Heart right ventricle (tissue), 16 donors: ENCODE measurements at regions of chr1 and their contacts with region 1.

Region 1: DNA sequence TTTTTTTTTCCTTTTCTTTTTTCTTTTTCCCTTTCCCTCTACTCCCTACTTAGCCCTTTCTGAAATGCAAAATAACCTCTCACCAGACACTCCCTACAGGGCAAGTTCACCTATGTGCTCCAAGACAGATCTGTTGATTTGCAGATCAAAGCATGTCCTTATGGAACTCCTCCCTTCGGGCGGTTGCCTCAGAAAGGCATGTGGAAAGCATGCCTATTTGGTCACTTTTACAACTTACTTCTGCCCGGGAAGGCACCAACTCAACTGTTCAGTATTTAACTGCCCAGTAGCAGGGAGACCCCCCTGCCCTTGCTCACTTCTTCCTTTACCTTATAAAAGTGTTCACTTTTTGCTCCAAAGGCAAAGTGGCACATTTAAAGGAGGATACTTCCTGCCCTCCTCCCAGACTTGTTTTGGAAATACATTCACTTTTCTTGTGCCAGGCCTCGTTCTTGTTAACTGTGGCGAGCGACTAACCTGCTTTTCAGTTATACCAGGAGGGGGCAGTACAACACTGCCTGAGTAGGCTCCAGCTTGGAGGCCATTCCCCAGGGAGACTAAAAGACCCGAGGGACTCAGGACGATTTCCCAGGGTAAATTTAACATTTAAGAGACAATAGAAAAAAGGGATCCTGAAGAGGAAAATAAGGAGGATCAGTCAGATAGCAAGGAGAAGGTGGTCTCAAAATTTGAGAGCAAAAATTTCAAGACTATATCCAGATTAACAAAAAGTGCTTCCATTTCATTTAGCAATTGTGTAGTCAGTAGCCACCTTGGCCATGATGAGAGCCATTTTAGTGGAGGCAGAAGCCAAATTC is 12.3 kb upstream of the SLAMF7 start:
- DNase-seq: peak in 1 of 2 donors; percentile 50
- ATAC-seq: peak in 7 of 8 donors; percentile 55 to 90 (median 72)
- H3K4me3 ChIP-seq: no peak overlapping the region
- H3K27ac ChIP-seq: peak overlapping the region in 1 of 10 donors; percentile 45
- H3K4me1 ChIP-seq: peaks cover 0 to 30% (median 0%) of the 10 kb centered on the region in 9 donors
- H3K27me3 ChIP-seq: peaks cover 0 to 14% (median 0%) of the 10 kb centered on the region in 7 donors
- CTCF ChIP-seq: peak; percentile 48 to 88 (median 73)

Region 2: DNA sequence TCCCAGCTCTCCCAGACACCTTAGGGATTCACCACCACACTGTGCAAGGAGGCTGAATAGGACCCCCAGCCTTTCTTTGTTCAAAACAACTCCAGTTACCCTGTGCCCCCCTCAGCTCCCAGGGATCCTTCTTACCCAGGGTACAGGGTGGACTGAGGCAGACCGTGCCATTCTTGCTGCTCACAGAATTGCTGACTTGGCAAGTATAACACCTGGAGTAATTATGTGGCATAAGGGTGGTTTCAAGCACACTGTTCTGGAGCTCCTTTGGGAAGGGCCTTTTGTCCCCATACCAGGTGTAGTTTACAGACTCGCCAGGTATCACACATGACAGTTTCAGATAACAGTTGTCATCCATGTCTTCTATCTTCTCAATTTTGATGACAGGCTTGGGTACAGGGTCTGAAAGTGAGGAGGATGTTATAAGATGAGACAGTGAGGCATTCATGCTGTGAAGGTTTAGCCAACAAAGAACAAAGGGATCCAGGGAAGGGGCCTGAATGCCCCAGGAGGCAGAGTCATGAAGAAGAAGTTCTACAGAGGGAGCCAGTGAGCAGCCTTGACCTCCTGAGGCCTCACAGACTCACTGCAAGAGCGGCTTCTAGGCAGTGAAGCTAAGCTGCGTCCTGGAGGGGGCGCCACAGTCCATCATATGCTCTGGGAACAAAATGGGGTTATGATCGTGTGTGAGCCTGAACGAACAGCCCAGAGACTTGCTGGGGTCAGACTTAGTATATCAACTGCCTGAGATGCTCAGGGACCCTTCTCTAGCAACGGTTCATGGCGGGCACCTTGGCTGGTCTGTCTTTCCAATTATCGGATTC is 45.4 kb before region 1 on chr1:
- intact Hi-C with region 1: loop called in 1 of 10 experiments (anchors 5 kb)
- DNase-seq: peak; percentile 50 to 67
- ATAC-seq: peak in 7 of 8 donors; percentile 34 to 83 (median 70)
- H3K4me3 ChIP-seq: no peak overlapping the region
- H3K27ac ChIP-seq: peak overlapping the region in 1 of 10 donors; percentile 22
- H3K4me1 ChIP-seq: peaks cover 0 to 49% (median 0%) of the 10 kb centered on the region in 9 donors
- H3K27me3 ChIP-seq: peaks cover 0 to 34% (median 7%) of the 10 kb centered on the region in 7 donors
- CTCF ChIP-seq: peak; percentile 9 to 80 (median 52)

Region 3: GRCh38 chr1:160768295-160768657 is 41.6 kb after region 1 on chr1:
- intact Hi-C with region 1: loop called in 1 of 10 experiments (anchors 5 kb)
- DNase-seq: peak; percentile 38 to 41
- ATAC-seq: peak in 6 of 8 donors; percentile 55 to 72 (median 62)
- H3K4me3 ChIP-seq: peak overlapping the region in 4 of 10 donors; percentile 11 to 34 (median 24)
- H3K27ac ChIP-seq: peak overlapping the region in 1 of 10 donors; percentile 83
- H3K4me1 ChIP-seq: peaks cover 0 to 22% (median 0%) of the 10 kb centered on the region in 9 donors
- H3K27me3 ChIP-seq: peaks cover 0 to 10% (median 2%) of the 10 kb centered on the region in 7 donors
- CTCF ChIP-seq: peak in 6 of 9 donors; percentile 28 to 78 (median 38)

Region 4: DNA sequence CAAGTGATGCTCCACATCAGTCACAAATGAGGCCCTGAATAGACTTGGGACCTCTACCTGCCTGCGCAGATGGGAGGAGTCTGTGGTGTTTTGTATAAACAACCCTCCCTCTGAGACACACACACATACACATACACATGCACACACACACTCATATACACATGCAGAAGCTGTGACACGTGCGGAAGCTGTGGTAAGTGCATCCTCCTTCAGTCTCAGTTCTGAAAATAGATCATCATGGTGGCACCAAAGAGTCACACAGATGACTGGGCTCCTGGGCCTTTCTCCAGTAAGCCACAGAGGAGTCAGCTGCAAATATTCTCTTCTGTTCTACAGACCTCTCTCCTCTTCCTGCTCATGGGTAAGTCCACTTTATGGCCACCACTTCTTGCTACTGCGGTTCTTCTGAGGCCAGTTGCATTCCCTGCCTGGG is 69.3 kb after region 1 on chr1 and contains the start of gene LY9:
- intact Hi-C with region 1: no loop called
- DNase-seq: no peak
- ATAC-seq: peak in 3 of 8 donors; percentile 33 to 61 (median 51)
- H3K4me3 ChIP-seq: peak within 1 kb of the TSS in 1 of 10 donors; percentile 43
- H3K27ac ChIP-seq: peak within 1 kb of the TSS in 1 of 10 donors; percentile 67
- H3K4me1 ChIP-seq: peaks cover 0 to 6% (median 0%) of the 10 kb centered on the region in 9 donors
- H3K27me3 ChIP-seq: peaks cover 0 to 8% (median 0%) of the 10 kb centered on the region in 7 donors
- CTCF ChIP-seq: no peak
- total RNA-seq, gene LY9: 0.25 to 1.4 (median 0.42) TPM in 5 of 10 donors, not detected in the others

Region 5: DNA sequence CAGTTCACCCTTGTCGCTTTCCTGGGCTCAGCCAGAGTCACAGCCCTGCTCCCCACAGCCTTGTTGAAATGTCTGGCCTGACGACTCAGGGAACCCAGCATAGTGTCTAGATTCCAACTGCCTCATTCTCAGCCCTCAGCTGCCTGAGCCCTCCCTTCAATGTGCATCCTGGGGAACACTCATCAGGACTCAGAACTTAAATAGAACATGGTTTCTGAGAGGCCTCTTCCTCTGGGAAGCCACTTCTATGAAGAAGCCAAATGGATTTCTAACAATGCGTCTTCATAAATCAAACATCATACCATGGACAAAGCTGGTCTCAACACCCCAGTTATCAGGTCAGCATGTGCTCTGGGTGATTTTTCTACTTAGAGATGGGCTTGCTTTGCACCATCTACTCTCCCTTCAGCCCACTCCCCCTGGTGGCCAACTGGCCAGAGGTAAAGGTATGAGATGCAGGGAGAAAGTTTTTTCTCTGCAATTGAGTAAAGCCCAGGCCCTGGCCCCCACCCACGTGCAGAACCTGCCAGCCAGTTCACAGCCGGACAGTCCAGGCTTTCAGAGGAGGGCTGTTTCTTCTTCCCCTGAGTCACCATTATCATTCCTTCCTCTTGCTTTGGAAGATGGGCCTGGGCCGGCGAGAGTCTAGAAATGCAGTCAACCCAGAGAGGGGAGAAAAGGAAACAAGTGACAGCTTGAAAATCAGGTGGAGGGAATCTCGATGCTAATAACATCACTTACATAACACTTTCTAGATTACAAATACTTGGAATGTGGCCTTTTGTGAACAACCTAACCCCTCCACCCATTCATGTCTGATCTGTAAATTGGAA is 103.8 kb after region 1 on chr1:
- intact Hi-C with region 1: loop called in 1 of 10 experiments (anchors 10 kb)
- DNase-seq: peak; percentile 21 to 39
- ATAC-seq: peak in 2 of 8 donors; percentile 27 to 31
- H3K4me3 ChIP-seq: no peak overlapping the region
- H3K27ac ChIP-seq: no peak overlapping the region
- H3K4me1 ChIP-seq: no peaks in the 10 kb centered on the region
- H3K27me3 ChIP-seq: peaks cover 0 to 20% (median 0%) of the 10 kb centered on the region in 7 donors
- CTCF ChIP-seq: peak in 7 of 9 donors; percentile 33 to 62 (median 53)